Caco-2 (cell line): ENCODE measurements at regions of chr19 and their contacts with region 1.

Region 1: GRCh38 chr19:9934132-9934950 is 2.0 kb downstream of the OLFM2 start:
- DNase-seq: peak; percentile 75 to 85
- H3K4me3 ChIP-seq: no peak overlapping the region
- H3K4me3 Mint-ChIP-seq: no peak overlapping the region
- H3K27ac Mint-ChIP-seq: no peak overlapping the region
- H3K4me1 ChIP-seq: no peaks in the 10 kb centered on the region
- H3K4me1 Mint-ChIP-seq: no peaks in the 10 kb centered on the region
- H3K27me3 ChIP-seq: no peaks in the 10 kb centered on the region
- H3K27me3 Mint-ChIP-seq: peaks cover 7% of the 10 kb centered on the region
- CTCF ChIP-seq: peak; percentile 83 to 89

Region 2: DNA sequence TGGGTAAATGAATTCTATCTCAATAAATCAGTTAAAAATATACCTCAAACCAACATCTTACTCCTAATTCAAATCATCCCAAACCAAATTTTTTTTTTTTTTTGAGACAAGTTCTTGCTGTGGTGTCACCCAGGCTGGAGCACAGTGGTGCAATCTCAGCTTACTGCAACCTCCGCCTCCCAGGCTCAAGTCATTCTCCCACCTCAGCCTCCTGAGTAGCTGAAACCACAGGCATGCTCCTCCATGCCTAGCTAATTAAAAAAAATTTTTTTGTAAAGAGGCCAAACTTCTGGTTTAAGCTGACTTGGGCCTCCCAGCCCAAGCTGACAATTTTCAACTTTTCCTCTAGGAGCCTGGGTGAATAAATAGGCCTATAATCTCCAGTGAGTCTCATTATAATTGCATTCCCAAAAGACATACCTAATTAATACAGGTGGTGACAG is 24.1 kb after region 1 on chr19:
- CTCF ChIA-PET with region 1: interaction called, 11 read pairs
- POLR2A ChIA-PET with region 1: no interaction called
- intact Hi-C with region 1: no loop called
- DNase-seq: no peak
- H3K4me3 ChIP-seq: no peak overlapping the region
- H3K4me3 Mint-ChIP-seq: no peak overlapping the region
- H3K27ac Mint-ChIP-seq: no peak overlapping the region
- H3K4me1 ChIP-seq: no peaks in the 10 kb centered on the region
- H3K4me1 Mint-ChIP-seq: no peaks in the 10 kb centered on the region
- H3K27me3 ChIP-seq: no peaks in the 10 kb centered on the region
- H3K27me3 Mint-ChIP-seq: peaks cover 4% of the 10 kb centered on the region
- CTCF ChIP-seq: no peak

Region 3: DNA sequence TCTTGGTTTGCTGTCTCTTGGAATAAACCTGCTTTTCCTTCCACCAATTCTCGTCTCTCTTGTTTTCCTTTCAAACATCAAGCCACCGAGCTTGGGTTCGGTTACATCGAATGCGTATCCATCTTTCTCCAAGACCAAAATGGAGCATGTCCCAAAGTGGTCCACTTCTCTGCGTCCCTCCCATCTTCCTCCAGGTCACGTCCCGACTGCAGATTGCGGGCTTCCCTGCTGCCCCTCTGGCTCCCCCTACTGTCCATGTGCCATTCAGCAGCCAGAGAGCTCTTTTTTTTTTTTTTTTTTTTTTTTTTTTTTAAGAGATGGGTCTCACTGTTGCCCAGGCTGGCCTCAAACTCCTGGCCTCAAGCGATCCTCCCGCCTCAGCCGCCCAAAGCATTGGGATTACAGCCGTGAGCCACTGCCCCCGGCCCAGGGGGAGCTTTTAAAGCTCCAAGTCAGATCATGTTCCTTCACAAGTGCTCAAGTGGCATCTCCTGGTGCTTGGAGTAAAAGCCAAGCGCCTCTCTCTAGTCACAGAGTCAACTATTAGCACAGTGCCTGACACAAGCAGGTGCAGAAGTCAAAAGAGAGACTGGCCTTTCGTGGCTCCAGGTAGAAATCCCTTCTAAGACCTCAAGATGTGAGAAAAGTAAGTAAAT is 66.0 kb after region 1 on chr19:
- CTCF ChIA-PET with region 1: interaction called, 16 read pairs
- POLR2A ChIA-PET with region 1: no interaction called
- intact Hi-C with region 1: loop called (anchors 1 kb)
- DNase-seq: peak; percentile 65 to 76
- H3K4me3 ChIP-seq: no peak overlapping the region
- H3K4me3 Mint-ChIP-seq: no peak overlapping the region
- H3K27ac Mint-ChIP-seq: no peak overlapping the region
- H3K4me1 ChIP-seq: no peaks in the 10 kb centered on the region
- H3K4me1 Mint-ChIP-seq: no peaks in the 10 kb centered on the region
- H3K27me3 ChIP-seq: no peaks in the 10 kb centered on the region
- H3K27me3 Mint-ChIP-seq: peaks cover 19% of the 10 kb centered on the region
- CTCF ChIP-seq: peak; percentile 64 to 81

Region 4: DNA sequence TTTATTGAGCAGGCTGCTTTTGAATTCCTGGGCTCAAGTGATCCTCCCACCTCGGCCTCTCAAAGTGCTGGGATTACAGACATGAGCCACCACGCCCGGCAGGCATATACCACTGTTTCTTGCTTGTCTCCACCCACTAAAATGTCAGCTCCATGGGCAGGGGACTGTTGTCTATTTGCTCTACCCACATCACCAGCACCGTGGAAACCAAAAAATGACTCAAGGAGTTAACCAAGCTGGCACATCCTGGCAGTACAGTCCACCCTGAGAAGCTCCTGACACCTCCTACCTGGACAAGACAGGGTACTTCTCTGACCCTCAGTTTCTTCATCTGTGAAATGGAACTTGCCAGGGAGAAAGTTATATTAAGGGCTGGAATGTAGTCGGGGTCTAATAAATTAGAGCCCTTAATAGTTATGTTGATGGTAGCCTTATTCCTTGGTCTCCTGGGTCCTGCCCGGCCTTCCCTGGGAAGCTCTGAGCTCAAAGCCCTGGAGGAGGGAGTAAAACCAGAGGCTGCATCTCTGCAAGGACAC is 92.9 kb after region 1 on chr19:
- CTCF ChIA-PET with region 1: interaction called, 29 read pairs
- POLR2A ChIA-PET with region 1: no interaction called
- intact Hi-C with region 1: loop called (anchors 1 kb)
- DNase-seq: no peak
- H3K4me3 ChIP-seq: no peak overlapping the region
- H3K4me3 Mint-ChIP-seq: no peak overlapping the region
- H3K27ac Mint-ChIP-seq: no peak overlapping the region
- H3K4me1 ChIP-seq: no peaks in the 10 kb centered on the region
- H3K4me1 Mint-ChIP-seq: no peaks in the 10 kb centered on the region
- H3K27me3 ChIP-seq: no peaks in the 10 kb centered on the region
- H3K27me3 Mint-ChIP-seq: peaks cover 14% of the 10 kb centered on the region
- CTCF ChIP-seq: no peak

Region 5: GRCh38 chr19:10112895-10113591 is 178.7 kb after region 1 on chr19:
- CTCF ChIA-PET with region 1: no interaction called
- POLR2A ChIA-PET with region 1: no interaction called
- intact Hi-C with region 1: loop called (anchors 10 kb)
- DNase-seq: peak; percentile 50 to 57
- H3K4me3 ChIP-seq: no peak overlapping the region
- H3K4me3 Mint-ChIP-seq: no peak overlapping the region
- H3K27ac Mint-ChIP-seq: peak overlapping the region; percentile 69
- H3K4me1 ChIP-seq: no peaks in the 10 kb centered on the region
- H3K4me1 Mint-ChIP-seq: peaks cover 6% of the 10 kb centered on the region
- H3K27me3 ChIP-seq: no peaks in the 10 kb centered on the region
- H3K27me3 Mint-ChIP-seq: no peaks in the 10 kb centered on the region
- CTCF ChIP-seq: peak; percentile 30 to 42

Region 6: GRCh38 chr19:10251792-10252694 is 317.7 kb after region 1 on chr19 and contains the start of gene MRPL4:
- CTCF ChIA-PET with region 1: interaction called, 4 read pairs
- POLR2A ChIA-PET with region 1: no interaction called
- intact Hi-C with region 1: loop called (anchors 1 kb)
- DNase-seq: peak; percentile 95 to 97
- H3K4me3 ChIP-seq: peak within 1 kb of the TSS; percentile 93
- H3K4me3 Mint-ChIP-seq: peak within 1 kb of the TSS; percentile 93
- H3K27ac Mint-ChIP-seq: peak within 1 kb of the TSS; percentile 94
- H3K4me1 ChIP-seq: peaks cover 4% of the 10 kb centered on the region; the same call in 1 of the 2 replicates
- H3K4me1 Mint-ChIP-seq: no peaks in the 10 kb centered on the region
- H3K27me3 ChIP-seq: no peaks in the 10 kb centered on the region
- H3K27me3 Mint-ChIP-seq: no peaks in the 10 kb centered on the region
- CTCF ChIP-seq: no peak
- total RNA-seq, gene MRPL4: 85.9 and 87.4 TPM in 2 replicates

Region 7: DNA sequence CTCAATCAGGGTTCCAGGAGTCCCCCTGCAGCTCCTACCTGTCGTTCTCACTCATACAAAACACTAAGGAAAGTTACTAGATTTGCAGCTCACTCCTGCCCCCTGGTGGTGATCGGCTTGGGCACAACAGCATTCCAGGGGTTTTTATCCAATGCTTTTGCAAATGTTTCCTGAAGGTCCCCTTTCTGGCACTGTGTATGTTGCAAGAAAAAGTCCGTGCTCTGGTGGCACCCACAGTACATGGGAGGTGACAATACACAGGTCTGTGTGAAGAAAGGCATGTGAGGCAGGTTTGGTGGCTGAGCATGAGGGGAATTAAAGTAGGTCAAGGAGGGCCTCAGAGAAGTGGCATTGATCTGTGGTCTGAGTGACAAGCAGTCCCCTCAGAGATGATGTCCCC is 454.6 kb after region 1 on chr19:
- CTCF ChIA-PET with region 1: no interaction called
- POLR2A ChIA-PET with region 1: no interaction called
- intact Hi-C with region 1: loop called (anchors 5 kb)
- DNase-seq: peak; percentile 82 to 87
- H3K4me3 ChIP-seq: no peak overlapping the region
- H3K4me3 Mint-ChIP-seq: no peak overlapping the region
- H3K27ac Mint-ChIP-seq: peak overlapping the region; percentile 49
- H3K4me1 ChIP-seq: no peaks in the 10 kb centered on the region
- H3K4me1 Mint-ChIP-seq: no peaks in the 10 kb centered on the region
- H3K27me3 ChIP-seq: no peaks in the 10 kb centered on the region
- H3K27me3 Mint-ChIP-seq: no peaks in the 10 kb centered on the region
- CTCF ChIP-seq: peak; percentile 87 to 90